Adrenal gland (tissue), 19 donors: ENCODE measurements at regions of chr6 and their contacts with region 1.

Region 1: GRCh38 chr6:39302669-39303424 is 11.4 kb downstream of the KCNK17 start:
- DNase-seq: peak; percentile 76 to 93 (median 86)
- H3K4me3 ChIP-seq: no peak overlapping the region
- H3K27ac ChIP-seq: no peak overlapping the region
- H3K4me1 ChIP-seq: peaks cover 0 to 3% of the 10 kb centered on the region in 2 donors
- H3K27me3 ChIP-seq: no peaks in the 10 kb centered on the region
- CTCF ChIP-seq: peak; percentile 77 to 96 (median 92)
- POLR2A ChIP-seq: no peak

Region 2: DNA sequence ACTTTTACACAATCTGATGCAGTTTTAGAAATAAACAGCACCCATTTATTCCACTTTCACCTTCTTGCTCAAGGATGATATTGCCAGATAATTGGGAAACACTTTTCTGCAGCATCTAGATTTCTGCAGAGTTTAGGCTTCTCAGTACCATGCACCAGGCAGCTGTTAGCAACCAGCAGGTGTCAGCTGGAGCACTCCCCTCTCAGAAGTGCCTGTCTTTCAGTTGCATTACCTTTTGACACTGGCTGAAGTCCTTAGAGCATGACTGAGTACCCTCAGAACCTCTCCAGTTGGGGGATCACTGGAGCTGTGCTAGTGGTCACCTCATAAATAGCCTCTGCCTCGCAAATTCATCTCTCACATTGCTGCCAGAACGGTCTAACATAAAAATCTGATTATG is 496.6 kb before region 1 on chr6:
- intact Hi-C with region 1: no loop called
- DNase-seq: no peak
- H3K4me3 ChIP-seq: no peak overlapping the region
- H3K27ac ChIP-seq: no peak overlapping the region
- H3K4me1 ChIP-seq: no peaks in the 10 kb centered on the region
- H3K27me3 ChIP-seq: no peaks in the 10 kb centered on the region
- CTCF ChIP-seq: no peak
- POLR2A ChIP-seq: no peak

Region 3: GRCh38 chr6:38973178-38974054 is 329.4 kb before region 1 on chr6:
- intact Hi-C with region 1: loop called (anchors 10 kb)
- DNase-seq: peak in 4 of 7 donors; percentile 23 to 44 (median 33)
- H3K4me3 ChIP-seq: no peak overlapping the region
- H3K27ac ChIP-seq: no peak overlapping the region
- H3K4me1 ChIP-seq: no peaks in the 10 kb centered on the region
- H3K27me3 ChIP-seq: peaks cover 10% of the 10 kb centered on the region
- CTCF ChIP-seq: peak; percentile 31 to 71 (median 63)
- POLR2A ChIP-seq: no peak

Region 4: GRCh38 chr6:39166189-39166911 is 136.5 kb before region 1 on chr6:
- intact Hi-C with region 1: loop called (anchors 2 kb)
- DNase-seq: peak; percentile 69 to 85 (median 82)
- H3K4me3 ChIP-seq: no peak overlapping the region
- H3K27ac ChIP-seq: no peak overlapping the region
- H3K4me1 ChIP-seq: no peaks in the 10 kb centered on the region
- H3K27me3 ChIP-seq: no peaks in the 10 kb centered on the region
- CTCF ChIP-seq: peak; percentile 86 to 92 (median 90)
- POLR2A ChIP-seq: no peak